Calu3 (cell line): ENCODE measurements at regions of chr1 and their contacts with region 1.

Region 1: DNA sequence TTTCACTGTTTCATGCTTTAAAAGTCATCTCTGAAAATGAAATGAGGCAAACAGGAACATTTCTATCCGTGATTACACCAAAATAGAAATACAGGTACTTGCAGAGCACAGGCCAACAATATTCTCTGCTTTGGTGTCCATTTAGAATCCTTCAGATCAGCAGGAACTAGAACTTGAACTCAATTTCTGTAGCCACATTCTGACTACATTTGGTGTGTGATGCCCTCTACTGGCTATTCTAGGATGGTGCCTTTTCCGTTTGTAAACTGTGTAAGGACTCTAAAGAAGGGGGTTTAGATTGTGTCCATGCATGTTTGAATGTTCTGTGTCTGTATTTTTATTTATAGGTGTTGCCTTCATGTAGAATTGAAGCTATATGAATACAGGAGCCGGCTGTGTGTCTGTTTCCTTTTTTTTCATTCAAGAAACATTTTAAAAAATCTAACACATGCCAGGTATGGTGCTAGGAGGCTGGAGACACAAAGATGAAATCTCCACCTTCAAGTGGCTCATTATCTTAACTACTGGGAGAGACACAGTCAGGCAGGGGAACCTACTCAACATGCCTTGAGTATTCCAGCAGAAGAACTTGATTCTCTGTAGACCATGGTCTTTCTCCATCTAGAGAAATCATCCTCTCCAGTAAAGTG is 7.6 kb upstream of the ZNF326 start:
- DNase-seq: peak; percentile 48
- H3K4me3 Mint-ChIP-seq: no peak overlapping the region
- H3K27ac Mint-ChIP-seq: no peak overlapping the region
- H3K4me1 Mint-ChIP-seq: peaks cover 17% of the 10 kb centered on the region
- H3K27me3 Mint-ChIP-seq: no peaks in the 10 kb centered on the region
- CTCF ChIP-seq: peak; percentile 54

Region 2: DNA sequence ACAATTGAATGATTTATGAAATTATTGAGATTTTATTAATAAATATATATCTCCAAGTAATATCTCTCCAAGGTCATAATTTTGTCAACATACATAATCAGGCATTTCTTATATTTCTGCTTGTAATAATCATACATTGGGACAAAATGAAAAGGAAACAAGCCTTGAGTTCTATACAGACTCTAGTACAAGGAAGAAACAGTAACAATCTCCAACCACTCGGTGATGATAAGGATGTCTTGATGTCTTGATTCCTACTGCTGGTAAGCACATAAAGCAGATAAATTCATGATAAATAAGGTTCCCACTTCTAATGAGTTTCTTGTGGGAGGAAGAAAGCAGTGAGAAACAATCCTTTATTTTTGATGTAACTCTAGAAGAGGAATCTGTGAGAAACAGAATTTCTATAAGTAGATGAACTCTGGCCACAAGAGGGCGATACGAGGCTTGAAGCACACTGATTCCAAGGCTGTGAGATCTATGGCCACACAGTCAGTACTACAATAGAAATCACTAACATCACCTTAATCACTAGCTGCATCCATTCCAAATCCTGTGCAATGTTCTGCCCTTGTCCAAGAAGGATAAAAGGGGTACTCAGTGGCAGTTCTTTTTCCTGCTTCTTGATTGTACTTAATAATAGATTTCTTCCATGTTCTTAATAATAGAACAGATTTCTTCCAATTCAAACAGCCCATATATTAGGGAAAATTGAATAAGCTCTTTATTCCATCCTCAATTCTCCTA is 504.1 kb before region 1 on chr1:
- CTCF ChIA-PET with region 1: no interaction called
- intact Hi-C with region 1: loop called (anchors 10 kb)
- DNase-seq: peak; percentile 71
- H3K4me3 Mint-ChIP-seq: no peak overlapping the region
- H3K27ac Mint-ChIP-seq: no peak overlapping the region
- H3K4me1 Mint-ChIP-seq: no peaks in the 10 kb centered on the region
- H3K27me3 Mint-ChIP-seq: no peaks in the 10 kb centered on the region
- CTCF ChIP-seq: no peak

Region 3: DNA sequence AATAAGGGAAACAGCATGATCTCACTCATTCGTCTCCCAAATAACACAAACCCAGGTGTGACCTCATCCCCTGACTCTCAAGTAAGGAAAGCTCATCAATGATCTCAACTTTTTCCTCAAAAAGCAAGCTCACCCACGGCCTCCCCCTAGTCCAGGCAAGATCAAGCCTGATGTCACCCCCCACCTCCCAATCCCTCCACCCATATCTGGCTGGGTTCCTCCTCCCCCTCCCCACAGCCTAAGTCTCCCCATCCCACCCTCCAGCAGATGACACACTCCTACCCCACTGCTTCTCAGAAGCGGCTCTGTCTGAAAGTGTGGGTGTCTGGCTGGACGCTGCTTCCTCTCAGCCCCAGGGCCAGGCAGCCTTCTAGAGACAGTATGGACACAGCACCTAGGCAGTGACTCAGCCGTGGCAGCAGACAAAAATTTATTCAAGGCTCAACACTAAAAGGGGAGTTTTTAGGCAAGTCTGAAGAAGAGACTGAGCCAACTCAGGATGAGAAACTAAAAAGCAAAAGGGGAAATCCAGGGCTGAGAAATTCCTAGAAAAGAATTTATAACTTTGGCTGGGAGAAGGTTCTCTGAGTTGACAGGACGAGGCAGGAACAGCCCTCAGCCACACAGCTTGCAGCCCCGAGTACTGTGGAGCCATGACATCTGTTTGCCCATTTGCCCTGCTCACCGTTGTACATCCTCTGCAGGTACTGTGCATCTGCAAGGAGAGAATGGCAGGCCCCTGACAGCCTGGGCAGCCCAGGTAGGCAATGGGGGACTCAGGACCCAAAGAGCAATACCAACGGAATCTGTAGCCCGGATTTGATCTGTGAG is 248.1 kb before region 1 on chr1:
- CTCF ChIA-PET with region 1: no interaction called
- intact Hi-C with region 1: no loop called
- DNase-seq: no peak
- H3K4me3 Mint-ChIP-seq: no peak overlapping the region
- H3K27ac Mint-ChIP-seq: no peak overlapping the region
- H3K4me1 Mint-ChIP-seq: no peaks in the 10 kb centered on the region
- H3K27me3 Mint-ChIP-seq: peaks cover 34% of the 10 kb centered on the region
- CTCF ChIP-seq: no peak

Region 4: DNA sequence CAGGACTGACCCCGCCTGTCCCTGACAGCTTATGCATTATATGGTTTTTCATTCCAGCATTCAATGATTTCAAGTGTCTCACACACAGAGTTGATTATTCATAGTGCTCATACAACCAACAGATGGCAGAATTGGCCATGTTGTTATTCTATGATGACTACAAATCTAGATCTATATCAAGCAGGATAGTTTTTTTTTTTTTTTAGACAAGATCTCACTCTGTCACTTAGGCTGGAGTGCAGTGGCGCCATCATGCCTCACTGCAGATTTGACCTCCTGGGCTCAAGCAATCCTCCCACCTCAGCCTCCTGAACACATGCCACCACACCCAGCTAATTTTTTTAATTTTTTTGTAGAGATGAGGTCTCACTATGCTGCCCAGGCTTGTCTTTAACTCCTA is 206.6 kb before region 1 on chr1:
- CTCF ChIA-PET with region 1: no interaction called
- intact Hi-C with region 1: loop called (anchors 1 kb)
- DNase-seq: peak; percentile 10
- H3K4me3 Mint-ChIP-seq: no peak overlapping the region
- H3K27ac Mint-ChIP-seq: no peak overlapping the region
- H3K4me1 Mint-ChIP-seq: no peaks in the 10 kb centered on the region
- H3K27me3 Mint-ChIP-seq: no peaks in the 10 kb centered on the region
- CTCF ChIP-seq: peak; percentile 26

Region 5: GRCh38 chr1:89804642-89805237 is 182.6 kb before region 1 on chr1:
- CTCF ChIA-PET with region 1: interaction called, 7 read pairs
- intact Hi-C with region 1: loop called (anchors 1 kb)
- DNase-seq: peak; percentile 90
- H3K4me3 Mint-ChIP-seq: no peak overlapping the region
- H3K27ac Mint-ChIP-seq: no peak overlapping the region
- H3K4me1 Mint-ChIP-seq: peaks cover 6% of the 10 kb centered on the region
- H3K27me3 Mint-ChIP-seq: peaks cover 10% of the 10 kb centered on the region
- CTCF ChIP-seq: peak; percentile 80

Region 6: GRCh38 chr1:89843281-89844121 is 143.8 kb before region 1 on chr1:
- CTCF ChIA-PET with region 1: interaction called, 5 read pairs
- intact Hi-C with region 1: loop called (anchors 1 kb)
- DNase-seq: peak; percentile 82
- H3K4me3 Mint-ChIP-seq: peak overlapping the region; percentile 93
- H3K27ac Mint-ChIP-seq: peak overlapping the region; percentile 84
- H3K4me1 Mint-ChIP-seq: peaks cover 8% of the 10 kb centered on the region
- H3K27me3 Mint-ChIP-seq: no peaks in the 10 kb centered on the region
- CTCF ChIP-seq: peak; percentile 88

Region 7: GRCh38 chr1:91787919-91788318 is 1800.6 kb after region 1 on chr1:
- CTCF ChIA-PET with region 1: interaction called, 10 read pairs
- intact Hi-C with region 1: no loop called
- DNase-seq: no peak
- H3K4me3 Mint-ChIP-seq: no peak overlapping the region
- H3K27ac Mint-ChIP-seq: no peak overlapping the region
- H3K4me1 Mint-ChIP-seq: no peaks in the 10 kb centered on the region
- H3K27me3 Mint-ChIP-seq: no peaks in the 10 kb centered on the region
- CTCF ChIP-seq: no peak